Aorta (tissue), 5 donors: ENCODE measurements at regions of chr1 and their contacts with region 1.

Region 1: GRCh38 chr1:47703981-47704596 is 266.2 kb downstream of the FOXD2 start:
- DNase-seq: peak in 1 of 2 donors; percentile 56
- ATAC-seq: no peak
- H3K4me3 ChIP-seq: no peak overlapping the region
- H3K27ac ChIP-seq: no peak overlapping the region
- H3K4me1 ChIP-seq: no peaks in the 10 kb centered on the region
- H3K27me3 ChIP-seq: no peaks in the 10 kb centered on the region

Region 2: GRCh38 chr1:47547753-47548573 is 156.1 kb before region 1 on chr1:
- intact Hi-C with region 1: no loop called
- DNase-seq: no peak
- ATAC-seq: no peak
- H3K4me3 ChIP-seq: no peak overlapping the region
- H3K27ac ChIP-seq: no peak overlapping the region
- H3K4me1 ChIP-seq: no peaks in the 10 kb centered on the region
- H3K27me3 ChIP-seq: no peaks in the 10 kb centered on the region

Region 3: DNA sequence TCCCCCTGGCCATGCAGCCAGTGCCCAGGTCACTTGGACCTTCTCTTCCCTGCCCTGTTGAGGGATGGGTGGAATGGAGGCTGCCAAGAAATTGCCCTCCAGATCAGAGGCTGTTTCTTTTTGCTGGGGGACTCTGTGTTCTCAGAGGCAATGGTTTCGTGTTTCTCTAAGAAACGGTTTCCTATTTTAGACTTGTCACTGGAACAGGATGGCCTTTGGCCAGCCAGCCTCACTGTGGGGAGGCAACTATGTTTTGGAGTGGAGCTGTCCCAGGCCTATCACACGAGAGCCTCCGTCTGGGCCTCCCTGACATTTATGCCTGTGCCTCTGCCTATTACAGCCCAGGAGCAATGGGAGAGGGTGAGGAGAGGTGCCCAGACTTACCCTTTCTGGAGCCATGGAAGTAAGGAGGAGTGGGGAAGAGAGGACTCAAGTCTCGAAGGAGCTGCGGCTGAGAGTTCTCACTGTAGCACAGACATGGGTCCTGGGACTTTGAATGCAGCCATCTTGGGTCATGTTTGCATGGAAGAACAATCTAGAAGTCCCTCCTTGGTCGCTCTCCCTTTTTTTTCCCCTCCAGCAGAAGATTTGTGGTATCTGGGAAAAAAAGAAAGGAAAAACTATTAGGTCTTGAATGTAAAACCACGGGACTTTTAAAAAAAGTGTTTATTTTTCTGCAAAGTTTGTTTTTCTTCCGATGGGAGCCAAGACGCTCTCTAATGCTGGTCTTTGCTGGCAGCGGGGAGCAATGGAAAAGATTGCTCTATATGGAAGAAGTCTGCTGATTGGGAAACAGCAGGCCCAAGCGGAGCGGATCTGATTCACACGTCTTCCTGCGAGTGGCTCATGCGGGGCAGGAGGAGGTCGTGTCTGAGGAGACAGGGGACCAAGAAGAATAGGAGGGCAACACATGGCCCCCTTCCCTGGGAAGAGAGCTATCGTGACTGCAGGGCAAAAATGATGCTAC is 47.1 kb before region 1 on chr1:
- intact Hi-C with region 1: loop called (anchors 1 to 5 kb)
- DNase-seq: peak; percentile 92 to 93
- ATAC-seq: peak; percentile 91
- H3K4me3 ChIP-seq: no peak overlapping the region
- H3K27ac ChIP-seq: peak overlapping the region; percentile 99 to 100
- H3K4me1 ChIP-seq: peaks cover 2 to 10% of the 10 kb centered on the region in 2 donors
- H3K27me3 ChIP-seq: no peaks in the 10 kb centered on the region

Region 4: DNA sequence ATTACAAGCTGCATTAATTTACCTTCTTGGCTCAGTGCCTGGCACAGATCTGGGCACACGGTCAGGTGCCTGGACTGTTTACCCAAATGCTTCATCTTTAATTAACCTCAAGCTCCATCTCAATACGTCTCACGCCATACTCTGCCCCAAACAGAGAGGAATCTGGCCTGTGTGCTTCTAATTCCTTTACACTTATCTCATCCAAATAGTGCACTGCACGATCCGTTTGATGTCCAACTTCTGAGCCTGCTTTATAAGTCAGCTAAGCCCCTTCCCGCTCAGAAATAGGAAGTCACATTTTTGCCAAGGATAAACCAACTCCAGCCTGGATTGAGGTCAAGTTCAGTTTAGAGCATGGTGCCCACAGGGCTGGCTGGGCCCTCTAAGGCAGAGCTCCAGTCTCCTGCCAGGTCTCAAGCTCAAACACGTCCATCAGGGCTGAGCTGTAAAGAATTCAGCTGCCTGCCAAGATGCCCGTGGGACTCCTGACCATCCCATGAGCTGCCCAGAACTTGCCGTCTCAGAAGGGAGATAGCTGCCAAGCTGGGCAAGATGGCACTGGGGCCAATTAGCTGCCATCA is 59.6 kb after region 1 on chr1:
- intact Hi-C with region 1: no loop called
- DNase-seq: peak; percentile 72 to 73
- ATAC-seq: no peak
- H3K4me3 ChIP-seq: no peak overlapping the region
- H3K27ac ChIP-seq: peak overlapping the region in 1 of 2 donors; percentile 82
- H3K4me1 ChIP-seq: peaks cover 0 to 8% of the 10 kb centered on the region in 2 donors
- H3K27me3 ChIP-seq: no peaks in the 10 kb centered on the region